Panc1 (cell line): ENCODE measurements at regions of chr15 and their contacts with region 1.

Region 1: DNA sequence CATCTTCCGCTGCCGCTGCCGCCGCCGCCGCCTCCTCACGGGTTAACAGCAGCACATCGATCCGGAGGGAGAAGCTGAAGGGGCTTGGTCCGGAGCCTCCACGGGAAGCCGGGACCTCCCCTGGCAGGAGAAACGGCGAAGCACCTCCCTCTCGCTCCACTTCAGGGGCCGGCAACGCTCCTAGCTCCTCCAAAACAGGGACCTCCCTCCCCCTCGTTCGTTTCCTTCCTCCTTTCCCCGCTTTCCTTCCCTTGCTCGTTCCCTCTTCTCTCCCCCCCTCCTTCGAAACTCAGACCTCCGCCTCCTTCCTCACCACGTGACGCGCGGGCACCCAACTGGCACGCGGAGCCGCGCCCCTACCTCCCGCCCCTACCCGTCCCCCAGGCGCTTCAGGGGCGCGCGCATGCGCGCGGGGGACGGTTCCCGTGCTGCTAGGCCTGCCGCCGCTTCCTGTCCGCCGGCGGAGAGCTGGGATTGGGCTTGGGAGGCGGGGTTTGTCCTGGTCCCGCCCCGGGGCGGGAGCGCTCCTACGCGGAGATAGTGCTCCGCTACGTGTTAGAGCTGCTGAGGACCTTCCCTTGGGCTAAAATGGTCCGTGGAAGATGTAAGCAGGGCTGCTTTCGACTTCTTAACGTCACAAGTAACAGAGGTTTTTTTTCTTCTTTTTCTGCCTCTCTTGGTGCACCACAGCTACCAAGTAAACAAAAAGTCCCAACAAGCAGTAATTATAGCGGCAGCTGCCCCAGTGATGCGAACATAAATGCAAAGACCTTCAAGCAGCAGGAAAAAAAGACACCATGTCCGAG is at the start of gene ADAM10:
- DNase-seq: peak; percentile 96
- ATAC-seq: peak; percentile 97
- H3K4me3 ChIP-seq: peak within 1 kb of the TSS; percentile 82 to 86
- H3K27ac ChIP-seq: peak within 1 kb of the TSS; percentile 94
- H3K4me1 ChIP-seq: peaks cover 19% of the 10 kb centered on the region
- H3K27me3 ChIP-seq: no peaks in the 10 kb centered on the region
- CTCF ChIP-seq: no peak
- total RNA-seq, gene ADAM10: 176 TPM

Region 2: DNA sequence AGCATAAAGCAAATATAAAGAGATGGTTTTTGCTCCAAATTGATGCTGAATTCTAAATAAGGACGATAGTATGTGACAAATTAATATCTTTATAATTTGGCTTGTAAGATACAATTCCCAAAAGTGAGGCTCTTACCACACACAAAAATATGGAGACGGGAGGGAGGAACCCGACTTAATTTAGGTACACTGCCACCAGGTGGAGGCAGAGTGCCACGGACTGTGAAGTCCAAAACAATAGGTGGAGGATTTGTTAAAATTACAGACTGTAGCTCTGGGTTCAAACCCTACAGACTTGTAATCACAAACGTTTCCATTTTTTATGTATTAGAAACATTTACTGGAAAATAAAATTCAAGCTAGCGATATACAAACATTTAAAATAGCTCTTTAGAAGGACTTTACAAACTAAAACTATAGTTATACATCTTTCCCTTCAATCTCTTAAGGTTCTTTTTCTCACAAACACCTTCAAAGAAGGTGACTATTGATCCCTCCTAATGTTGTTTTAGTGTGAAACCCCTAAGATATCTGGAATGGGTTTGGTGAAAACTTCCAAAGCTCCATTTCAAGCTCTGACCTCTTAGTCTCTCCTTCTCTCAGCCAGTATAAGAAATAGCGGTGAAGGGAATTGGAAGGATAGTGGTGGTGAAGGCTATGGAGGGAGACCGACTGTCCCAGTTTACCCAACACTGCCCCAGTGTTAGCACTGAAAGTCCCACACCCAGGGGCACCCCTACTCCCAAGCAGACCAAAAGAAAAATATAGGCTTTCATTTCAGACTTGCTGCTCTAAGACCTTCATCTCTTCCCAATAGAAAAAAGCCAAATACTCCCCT is 521.8 kb before region 1 on chr15:
- CTCF ChIA-PET with region 1: no interaction called
- POLR2A ChIA-PET with region 1: no interaction called
- in situ Hi-C with region 1: no loop called
- intact Hi-C with region 1: loop called (anchors 10 kb)
- DNase-seq: peak; percentile 67
- ATAC-seq: peak; percentile 88
- H3K4me3 ChIP-seq: no peak overlapping the region
- H3K27ac ChIP-seq: no peak overlapping the region
- H3K4me1 ChIP-seq: peaks cover 3% of the 10 kb centered on the region; the same call in 1 of the 2 replicates
- H3K27me3 ChIP-seq: no peaks in the 10 kb centered on the region
- CTCF ChIP-seq: peak; percentile 91

Region 3: DNA sequence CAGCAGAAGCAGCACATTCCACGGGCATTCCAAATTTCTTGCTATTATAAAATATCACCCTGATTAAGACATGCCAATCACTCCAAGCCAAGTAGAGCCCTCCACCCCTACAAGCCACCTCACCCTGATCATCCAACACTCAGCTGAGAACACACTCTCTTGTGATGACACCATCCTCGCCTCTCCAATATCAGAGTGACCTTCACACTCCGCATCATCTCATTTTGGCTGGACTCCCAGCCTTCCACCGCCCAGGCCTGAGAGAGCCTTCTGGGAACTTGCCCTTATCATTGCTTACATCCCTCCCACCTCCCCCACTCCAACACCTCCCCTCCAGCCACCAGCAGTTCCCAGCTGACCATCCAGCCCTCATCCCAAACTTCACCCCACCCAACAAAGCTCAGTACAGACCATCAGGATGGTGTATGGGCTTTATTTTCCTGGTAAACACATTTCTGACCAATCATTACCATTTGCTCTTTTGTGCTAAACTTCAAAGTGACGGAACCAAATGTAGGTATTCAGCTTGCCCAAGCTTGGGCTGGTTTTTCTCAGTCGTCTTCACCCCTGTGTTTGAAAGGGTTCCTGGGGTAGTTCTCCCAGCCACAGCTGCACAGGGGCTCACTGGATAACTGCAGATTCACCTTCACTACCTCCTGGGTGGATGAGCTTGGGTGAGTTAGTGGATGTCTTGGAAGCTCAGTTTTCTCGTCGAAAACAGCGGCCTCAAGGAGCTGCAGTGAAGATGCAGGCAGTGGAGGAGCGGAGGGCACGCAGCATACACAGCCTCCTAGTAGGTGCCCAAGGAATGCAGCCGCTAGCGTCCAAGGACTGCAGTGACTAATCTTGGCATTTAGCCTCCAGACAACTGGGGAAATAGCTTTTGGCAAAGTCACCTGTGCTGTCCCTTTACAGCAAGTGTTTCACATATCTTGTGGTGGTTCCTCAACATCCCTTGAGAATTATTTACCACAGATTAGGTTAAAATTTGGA is 202.8 kb before region 1 on chr15:
- CTCF ChIA-PET with region 1: no interaction called
- POLR2A ChIA-PET with region 1: interaction called, 16 read pairs
- in situ Hi-C with region 1: no loop called
- intact Hi-C with region 1: no loop called
- DNase-seq: peak; percentile 77
- ATAC-seq: peak; percentile 91
- H3K4me3 ChIP-seq: no peak overlapping the region
- H3K27ac ChIP-seq: no peak overlapping the region
- H3K4me1 ChIP-seq: peaks cover 5% of the 10 kb centered on the region; the same call in 1 of the 2 replicates
- H3K27me3 ChIP-seq: no peaks in the 10 kb centered on the region
- CTCF ChIP-seq: no peak

Region 4: DNA sequence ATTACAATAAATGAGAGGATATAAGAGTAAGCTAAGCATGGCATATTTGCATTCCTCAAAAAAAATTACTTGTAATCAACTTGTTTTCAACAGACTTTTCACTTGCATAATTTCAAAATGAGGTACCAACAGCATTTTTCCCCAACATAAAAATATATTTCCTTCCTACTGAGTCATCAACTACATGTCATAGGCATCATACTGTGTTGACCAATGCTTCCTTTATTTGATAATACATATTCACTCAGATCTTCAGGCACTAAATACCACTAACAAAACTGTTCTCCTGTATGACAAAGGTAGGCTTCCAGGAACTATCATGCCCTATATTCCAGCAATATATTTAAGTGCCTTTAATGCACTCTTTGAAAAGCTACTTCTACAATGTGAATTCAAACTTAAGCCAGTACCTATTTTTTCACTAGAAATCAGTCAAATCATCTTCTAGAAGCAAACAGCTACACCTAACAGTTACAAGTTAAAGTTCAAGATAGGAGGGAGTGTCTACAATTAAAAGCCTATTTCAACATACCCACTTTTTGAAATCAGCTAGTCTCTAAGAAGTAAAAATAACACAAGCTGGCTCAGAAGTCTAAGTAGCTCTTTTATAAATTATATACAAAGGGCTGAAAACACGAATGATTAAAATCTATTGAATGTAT is 11.6 kb before region 1 on chr15:
- CTCF ChIA-PET with region 1: interaction called, 6 read pairs
- POLR2A ChIA-PET with region 1: interaction called, 10 read pairs
- in situ Hi-C with region 1: no loop called
- intact Hi-C with region 1: no loop called
- DNase-seq: no peak
- ATAC-seq: no peak
- H3K4me3 ChIP-seq: no peak overlapping the region
- H3K27ac ChIP-seq: no peak overlapping the region
- H3K4me1 ChIP-seq: peaks cover 22% of the 10 kb centered on the region
- H3K27me3 ChIP-seq: no peaks in the 10 kb centered on the region
- CTCF ChIP-seq: no peak

Region 5: GRCh38 chr15:58770857-58771620 is 21.3 kb after region 1 on chr15 and contains the start of gene MINDY2:
- CTCF ChIA-PET with region 1: interaction called, 9 read pairs
- POLR2A ChIA-PET with region 1: interaction called, 17 read pairs
- in situ Hi-C with region 1: no loop called
- intact Hi-C with region 1: no loop called
- DNase-seq: peak; percentile 97
- ATAC-seq: peak; percentile 98
- H3K4me3 ChIP-seq: peak within 1 kb of the TSS; percentile 90 to 93
- H3K27ac ChIP-seq: peak within 1 kb of the TSS; percentile 91
- H3K4me1 ChIP-seq: peaks cover 18% of the 10 kb centered on the region
- H3K27me3 ChIP-seq: no peaks in the 10 kb centered on the region
- CTCF ChIP-seq: peak; percentile 53
- total RNA-seq, gene MINDY2: 6.8 TPM